Right ventricle myocardium superior (tissue), 1 donor: ENCODE measurements at regions of chr7 and their contacts with region 1.

Region 1: DNA sequence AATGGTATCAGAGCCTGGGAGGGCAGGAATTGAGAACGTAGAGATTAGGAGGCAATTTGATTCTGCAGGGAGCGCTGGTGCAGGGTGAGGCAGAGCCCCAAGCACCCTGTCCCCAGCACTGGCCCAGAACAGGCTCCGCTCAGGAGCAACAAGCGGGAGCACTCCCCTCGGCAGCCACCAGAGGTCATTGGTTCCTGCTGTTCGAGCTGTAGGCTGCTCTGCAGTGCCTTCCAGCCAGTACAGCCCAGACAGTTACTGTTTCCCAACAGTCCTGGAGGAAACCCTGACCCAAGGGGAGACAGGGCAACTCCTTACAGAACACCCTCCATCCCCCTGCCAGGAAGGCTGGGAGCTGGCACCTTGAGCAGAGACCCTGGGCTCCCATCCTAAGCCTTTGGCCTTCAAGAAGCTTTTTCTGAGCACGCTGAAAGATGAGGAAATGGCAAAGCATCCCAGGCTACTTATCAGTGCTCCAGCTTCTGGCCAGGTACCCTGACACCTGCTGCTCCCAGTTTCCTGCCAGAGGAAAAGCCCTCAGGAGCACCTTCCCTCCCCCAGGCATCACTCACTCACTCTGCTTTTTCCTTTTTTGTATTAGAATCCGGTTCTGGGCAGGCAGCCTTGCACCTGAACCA is 71.2 kb upstream of the EFCAB10 start:
- DNase-seq: peak; percentile 87
- ATAC-seq: peak; percentile 90

Region 2: DNA sequence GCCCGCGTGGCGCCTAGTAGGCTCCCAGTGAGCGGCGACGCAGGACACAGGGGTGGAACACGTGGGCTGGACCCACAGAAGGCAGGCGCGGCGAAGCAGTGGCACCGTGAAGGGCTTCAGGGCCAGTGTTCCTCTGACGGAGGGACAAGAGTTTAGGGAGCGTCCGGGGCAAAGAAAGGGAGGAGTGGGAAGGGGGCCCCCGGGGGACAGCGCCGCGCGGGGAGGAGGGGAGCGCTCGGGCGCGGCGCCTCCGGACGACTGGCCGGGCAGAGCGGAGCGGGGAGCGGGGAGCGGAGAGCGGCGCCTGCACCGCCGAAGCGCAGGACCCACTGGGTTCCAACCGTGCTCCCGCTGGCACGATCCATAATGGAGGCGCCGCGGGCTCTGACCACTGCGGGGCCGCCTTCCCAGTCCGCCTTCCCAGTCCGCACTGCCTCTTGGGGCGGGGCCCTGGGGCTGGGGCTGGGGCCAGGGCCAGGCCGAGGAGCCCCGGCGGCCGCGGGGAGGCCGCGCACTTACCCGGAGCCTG is 130.9 kb before region 1 on chr7:
- intact Hi-C with region 1: no loop called
- DNase-seq: peak; percentile 87
- ATAC-seq: peak; percentile 96

Region 3: DNA sequence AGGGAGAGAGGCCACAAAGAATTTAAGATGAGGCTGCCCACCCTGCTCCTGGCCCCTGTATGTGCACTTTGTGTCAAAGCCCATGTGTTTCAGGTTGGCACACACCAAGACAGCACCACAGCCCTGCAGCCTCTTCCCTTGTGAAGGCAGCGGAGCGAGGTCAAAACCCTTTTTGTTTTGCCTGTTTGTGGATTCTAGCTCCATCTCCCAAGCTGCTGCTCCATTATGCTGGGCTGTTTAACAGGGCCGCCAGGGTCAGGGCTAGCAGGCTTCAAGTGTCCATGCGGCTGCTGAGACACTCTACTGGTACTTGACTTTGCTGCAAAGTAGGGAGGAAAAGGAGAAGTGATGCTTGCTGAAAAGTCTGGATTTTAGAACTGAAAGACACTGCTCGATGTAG is 71.1 kb after region 1 on chr7:
- intact Hi-C with region 1: loop called (anchors 10 kb)
- DNase-seq: no peak
- ATAC-seq: no peak

Region 4: GRCh38 chr7:105743351-105744090 is 91.0 kb after region 1 on chr7:
- intact Hi-C with region 1: loop called (anchors 10 kb)
- DNase-seq: no peak
- ATAC-seq: no peak

Region 5: DNA sequence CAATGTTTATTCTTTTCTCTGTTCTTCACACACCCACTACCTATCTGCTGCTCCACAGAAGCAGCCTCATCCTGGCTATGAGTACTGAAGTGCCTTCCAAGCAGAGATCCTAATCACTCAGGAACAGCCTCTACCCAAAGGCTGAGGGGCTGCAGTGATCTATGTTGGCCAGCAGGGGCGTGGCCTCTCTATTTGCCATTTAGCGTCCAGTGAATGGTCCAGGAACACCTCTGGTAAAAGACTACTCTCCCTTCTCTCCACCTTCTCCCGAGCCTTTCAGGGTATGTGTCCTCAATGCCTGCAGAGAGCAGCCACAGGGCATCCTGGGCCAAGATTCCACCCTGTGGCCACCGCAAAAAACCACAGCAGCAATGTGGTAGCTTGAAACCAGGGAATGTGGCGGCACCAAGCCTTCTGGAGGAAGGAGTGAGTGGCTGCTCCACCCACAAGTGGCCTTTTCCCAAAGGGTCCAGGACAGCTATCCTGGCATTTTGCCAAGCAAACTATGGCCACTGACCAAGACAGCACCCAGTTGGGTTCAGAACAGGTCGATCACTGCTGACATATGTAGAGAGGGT is 388.8 kb after region 1 on chr7:
- intact Hi-C with region 1: loop called (anchors 5 kb)
- DNase-seq: no peak
- ATAC-seq: no peak

Region 6: GRCh38 chr7:106166655-106167342 is 514.3 kb after region 1 on chr7:
- intact Hi-C with region 1: loop called (anchors 10 kb)
- DNase-seq: no peak
- ATAC-seq: peak; percentile 85